Esophagus muscularis mucosa (tissue), 4 donors: ENCODE measurements at regions of chr11 and their contacts with region 1.

Region 1: DNA sequence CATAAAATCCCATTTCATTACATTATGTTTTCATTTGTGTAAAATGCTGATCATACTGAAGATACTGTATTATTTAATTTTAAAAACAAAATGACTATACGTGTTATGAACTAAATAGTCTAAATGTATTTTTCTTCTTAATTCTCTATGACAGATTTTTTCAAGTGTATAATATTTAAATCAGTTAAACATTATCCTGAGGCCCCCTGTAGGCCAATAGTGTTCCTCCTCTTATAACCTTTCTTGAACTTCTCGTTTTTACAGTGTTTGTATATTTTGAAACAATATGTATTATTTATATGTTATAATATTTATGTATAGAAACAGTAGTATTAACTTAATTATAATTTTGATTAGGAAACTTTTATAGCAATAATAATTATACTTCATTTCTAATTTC is 151.1 kb upstream of the CHORDC1 start:
- DNase-seq: no peak
- H3K4me3 ChIP-seq: no peak overlapping the region
- H3K27ac ChIP-seq: no peak overlapping the region
- H3K4me1 ChIP-seq: no peaks in the 10 kb centered on the region
- H3K27me3 ChIP-seq: no peaks in the 10 kb centered on the region
- CTCF ChIP-seq: no peak
- EP300 ChIP-seq: no peak
- POLR2A ChIP-seq: no peak

Region 2: DNA sequence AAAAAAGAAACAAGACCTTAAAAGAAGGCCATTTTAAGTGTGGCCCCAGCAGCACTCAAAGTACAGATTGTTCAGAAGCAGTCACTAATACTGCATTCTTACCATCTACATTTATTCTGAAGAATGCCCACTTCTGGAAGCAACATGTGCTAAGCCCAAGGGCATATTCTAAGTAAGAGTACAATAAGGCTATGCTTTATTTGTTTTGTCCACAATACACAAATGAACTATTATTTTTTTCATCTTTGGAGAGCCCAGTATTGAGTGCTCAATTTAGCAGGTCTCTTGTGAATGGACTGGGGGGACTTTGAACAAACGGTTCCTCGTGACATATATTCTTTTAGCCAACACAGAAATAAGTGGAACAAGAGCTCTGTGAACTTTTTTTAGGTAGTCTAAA is 40.2 kb after region 1 on chr11:
- intact Hi-C with region 1: loop called (anchors 5 kb)
- DNase-seq: no peak
- H3K4me3 ChIP-seq: no peak overlapping the region
- H3K27ac ChIP-seq: no peak overlapping the region
- H3K4me1 ChIP-seq: no peaks in the 10 kb centered on the region
- H3K27me3 ChIP-seq: no peaks in the 10 kb centered on the region
- CTCF ChIP-seq: no peak
- EP300 ChIP-seq: no peak
- POLR2A ChIP-seq: no peak